ENCODE measurements at regions of chr20 and their contacts with region 1.

Region 1: DNA sequence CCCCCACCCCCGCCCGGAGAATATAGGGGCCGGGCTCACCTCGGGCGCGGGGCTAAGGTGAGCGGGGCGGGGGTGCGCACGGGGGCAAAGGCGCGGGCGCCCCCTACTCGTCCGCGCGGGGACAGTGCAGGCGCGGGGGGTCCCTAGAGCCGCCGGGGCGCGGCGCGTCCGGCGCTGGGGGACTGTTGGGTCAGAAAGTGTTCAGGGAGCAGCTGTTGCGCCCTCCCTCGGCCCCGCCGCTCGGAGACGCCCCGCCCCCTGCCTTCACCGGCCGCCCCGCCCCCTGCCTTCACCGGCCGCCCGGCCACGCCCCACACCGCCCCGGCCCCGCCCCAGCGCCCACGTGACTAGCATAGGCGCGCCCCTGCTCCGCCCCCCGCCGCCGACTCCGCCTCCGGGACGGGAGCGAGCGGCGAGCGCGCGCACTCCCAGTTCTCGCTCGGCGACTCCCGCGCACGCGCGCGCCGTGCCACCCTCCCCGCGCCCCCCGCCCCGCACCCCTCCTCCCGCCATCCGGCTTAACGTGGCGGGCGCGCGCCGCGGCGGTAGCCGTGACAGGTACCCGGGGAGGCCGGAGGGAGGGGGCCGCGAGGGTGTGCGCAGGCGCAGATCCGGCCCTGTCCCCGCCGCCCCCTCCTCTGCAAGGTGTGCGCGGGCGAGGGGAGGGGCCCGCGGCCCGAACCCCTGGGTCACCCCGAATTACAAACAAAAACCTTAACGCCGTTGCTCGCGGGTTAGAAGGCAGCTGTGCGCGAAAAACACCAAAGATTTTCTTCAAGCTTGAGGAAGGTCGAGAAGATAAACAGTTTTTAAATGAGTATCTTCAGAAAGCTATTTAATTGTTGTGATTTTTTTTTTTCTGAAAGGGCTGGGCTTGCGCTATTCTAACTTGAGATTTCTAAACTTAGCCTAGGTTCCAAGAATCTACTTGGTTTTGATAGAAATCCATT is 704 bp upstream of the ZNF217 start:
- DNase-seq: peak; percentile 73 to 98
- H3K4me3 ChIP-seq: peak overlapping the region; percentile 99
- H3K27ac ChIP-seq: peak overlapping the region; percentile 98
- H3K4me1 ChIP-seq: peaks cover 59% of the 10 kb centered on the region
- H3K27me3 ChIP-seq: no peaks in the 10 kb centered on the region
- CTCF ChIP-seq: no peak; the same call in 1 of the 2 replicates

Region 2: DNA sequence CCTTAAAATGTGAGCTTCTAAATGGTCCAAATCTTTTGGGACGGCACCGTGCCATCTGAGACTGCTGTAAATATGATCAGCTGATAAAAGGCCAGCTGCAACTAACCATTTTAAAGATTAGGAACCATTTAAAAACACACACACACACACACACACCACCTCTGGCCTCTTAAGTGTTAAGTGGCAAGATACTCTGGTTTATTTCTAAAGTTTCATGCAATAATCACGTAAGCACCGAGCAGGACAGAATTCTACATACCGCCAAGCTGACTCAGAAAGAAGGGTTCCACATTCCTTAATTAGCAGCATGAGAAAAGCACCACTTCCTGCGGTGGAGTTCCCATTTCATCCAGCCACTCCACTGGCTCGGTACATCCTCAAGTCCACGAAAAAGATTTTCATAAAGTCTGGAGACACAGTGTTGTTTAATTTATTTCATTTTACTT is 17.1 kb after region 1 on chr20:
- CTCF ChIA-PET with region 1: no interaction called
- POLR2A ChIA-PET with region 1: interaction called, 11 read pairs
- intact Hi-C with region 1: no loop called
- DNase-seq: peak; percentile 52 to 90
- H3K4me3 ChIP-seq: no peak overlapping the region
- H3K27ac ChIP-seq: peak overlapping the region; percentile 90
- H3K4me1 ChIP-seq: peaks cover 32% of the 10 kb centered on the region
- H3K27me3 ChIP-seq: no peaks in the 10 kb centered on the region
- CTCF ChIP-seq: no peak

Region 3: DNA sequence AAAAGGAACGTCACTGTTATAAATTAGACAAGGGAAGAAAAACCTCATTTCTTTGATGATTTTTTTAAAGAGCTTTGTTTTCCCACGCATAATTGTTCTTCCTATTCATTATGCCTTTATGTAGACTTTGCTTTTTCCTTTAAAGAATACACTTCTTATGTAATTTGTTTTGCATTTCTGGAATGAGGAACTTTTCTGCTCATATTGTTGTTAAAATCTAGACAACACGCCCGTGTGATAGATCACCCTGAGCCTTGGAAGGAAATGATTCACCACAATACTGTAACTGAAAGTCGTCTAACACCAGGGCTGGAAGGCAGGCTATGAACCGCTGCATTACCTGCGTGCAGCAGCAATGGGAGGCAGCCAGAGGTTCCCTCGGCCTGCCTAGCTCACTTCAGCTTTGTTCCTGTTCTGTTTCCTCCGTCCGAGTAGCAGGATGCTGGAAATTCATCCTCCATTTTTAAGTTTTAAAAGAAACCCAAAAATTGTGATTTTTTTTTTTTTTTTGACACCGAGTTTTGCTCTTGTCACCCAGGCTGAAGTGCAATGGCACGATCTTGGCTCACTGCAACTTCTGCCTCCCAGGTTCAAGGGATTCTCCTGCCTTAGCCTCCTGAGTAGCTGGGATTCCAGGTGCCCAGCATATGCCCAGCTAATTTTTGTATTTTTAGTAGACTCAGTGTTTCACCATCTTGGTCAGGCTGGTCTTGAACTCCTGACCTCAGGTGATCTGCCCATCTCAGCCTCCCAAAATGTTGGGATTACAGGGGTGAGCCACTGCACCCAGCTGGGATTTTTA is 48.9 kb after region 1 on chr20:
- CTCF ChIA-PET with region 1: no interaction called
- POLR2A ChIA-PET with region 1: interaction called, 11 read pairs
- intact Hi-C with region 1: loop called (anchors 1 kb)
- DNase-seq: peak; percentile 73 to 98
- H3K4me3 ChIP-seq: peak overlapping the region; percentile 26
- H3K27ac ChIP-seq: peak overlapping the region; percentile 94
- H3K4me1 ChIP-seq: peaks cover 39% of the 10 kb centered on the region
- H3K27me3 ChIP-seq: no peaks in the 10 kb centered on the region
- CTCF ChIP-seq: no peak; the same call in 1 of the 2 replicates

Region 4: DNA sequence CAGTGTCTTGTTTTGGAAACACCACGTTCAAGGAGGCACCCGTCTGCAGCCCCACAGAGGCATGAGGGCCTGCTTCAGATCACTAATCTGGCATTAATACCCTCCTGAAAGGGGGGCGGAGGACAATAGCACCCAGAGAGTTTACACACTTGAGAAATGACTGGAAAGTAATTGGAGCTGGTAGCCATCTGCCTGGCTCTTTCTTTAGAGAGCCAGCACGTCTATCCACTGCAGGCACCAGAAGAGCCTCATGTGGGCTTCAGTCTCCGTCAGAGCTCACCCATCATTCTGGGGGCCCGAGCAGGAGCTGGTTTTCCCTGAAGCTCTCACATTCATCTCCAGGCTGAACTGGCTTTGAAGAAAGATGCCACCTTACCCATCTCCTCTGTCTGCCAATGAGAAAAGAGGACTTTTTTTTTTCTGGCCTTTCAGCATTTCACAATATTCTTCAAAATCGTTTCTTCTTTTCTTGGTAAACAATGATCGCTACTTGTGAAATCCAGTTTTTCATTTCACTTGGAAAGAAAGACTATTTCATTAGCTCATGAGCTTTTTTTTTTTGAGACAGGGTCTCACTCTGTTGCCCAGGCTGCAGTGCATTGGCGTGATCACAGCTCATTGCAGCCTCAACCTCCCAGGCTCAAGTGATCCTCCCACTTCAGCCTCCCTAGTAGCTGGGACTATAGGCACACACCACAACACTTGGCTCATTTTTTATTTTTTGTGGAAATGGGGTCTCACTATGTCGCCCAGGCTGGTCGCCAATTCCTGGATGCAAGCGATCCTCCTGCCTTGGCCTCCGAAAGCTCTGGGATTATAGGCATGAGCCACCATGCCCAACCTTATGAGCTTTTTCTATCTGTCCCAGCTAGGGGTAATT is 124.0 kb after region 1 on chr20:
- CTCF ChIA-PET with region 1: no interaction called
- POLR2A ChIA-PET with region 1: no interaction called
- intact Hi-C with region 1: no loop called
- DNase-seq: no peak
- H3K4me3 ChIP-seq: no peak overlapping the region
- H3K27ac ChIP-seq: no peak overlapping the region
- H3K4me1 ChIP-seq: no peaks in the 10 kb centered on the region
- H3K27me3 ChIP-seq: no peaks in the 10 kb centered on the region
- CTCF ChIP-seq: no peak

Region 5: DNA sequence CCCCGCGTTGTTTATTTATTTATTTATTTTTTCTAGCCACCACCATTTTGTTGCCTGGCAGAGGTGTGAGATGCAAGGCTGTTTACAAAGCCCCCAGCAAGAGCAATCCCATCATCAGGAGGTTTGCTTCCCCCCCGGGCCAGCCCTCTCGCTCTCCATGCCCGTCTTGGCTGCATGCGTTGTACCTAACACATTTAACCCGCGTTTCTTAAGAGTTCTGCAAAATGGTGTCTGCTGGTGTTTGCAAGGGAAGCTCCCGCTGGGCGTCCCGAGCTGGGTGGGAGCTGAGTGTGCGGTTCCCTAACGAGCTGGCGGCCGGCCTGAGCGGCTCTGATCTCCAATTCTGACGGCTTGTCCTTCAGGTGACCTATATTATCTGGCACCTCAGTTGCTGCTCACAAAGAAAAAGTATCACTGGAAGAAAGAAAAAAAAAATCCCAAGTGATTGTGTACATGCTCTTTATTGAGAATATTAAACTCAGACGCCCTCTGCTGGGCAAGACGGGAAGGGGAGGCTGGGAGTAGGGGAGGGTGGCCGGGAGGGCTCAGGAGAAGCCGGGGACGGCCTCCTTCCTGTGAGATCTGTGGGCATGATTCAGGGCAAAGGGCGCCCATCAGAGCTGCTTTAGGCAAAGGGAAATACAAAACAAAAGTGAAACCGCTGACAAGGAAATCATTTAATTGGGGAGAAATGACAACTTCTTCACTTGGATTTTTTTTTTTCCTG is 321.3 kb after region 1 on chr20:
- CTCF ChIA-PET with region 1: no interaction called
- POLR2A ChIA-PET with region 1: no interaction called
- intact Hi-C with region 1: loop called (anchors 5 kb)
- DNase-seq: peak; percentile 95 to 98
- H3K4me3 ChIP-seq: peak overlapping the region; percentile 61
- H3K27ac ChIP-seq: peak overlapping the region; percentile 93
- H3K4me1 ChIP-seq: peaks cover 47% of the 10 kb centered on the region
- H3K27me3 ChIP-seq: no peaks in the 10 kb centered on the region
- CTCF ChIP-seq: peak; percentile 97

Region 6: DNA sequence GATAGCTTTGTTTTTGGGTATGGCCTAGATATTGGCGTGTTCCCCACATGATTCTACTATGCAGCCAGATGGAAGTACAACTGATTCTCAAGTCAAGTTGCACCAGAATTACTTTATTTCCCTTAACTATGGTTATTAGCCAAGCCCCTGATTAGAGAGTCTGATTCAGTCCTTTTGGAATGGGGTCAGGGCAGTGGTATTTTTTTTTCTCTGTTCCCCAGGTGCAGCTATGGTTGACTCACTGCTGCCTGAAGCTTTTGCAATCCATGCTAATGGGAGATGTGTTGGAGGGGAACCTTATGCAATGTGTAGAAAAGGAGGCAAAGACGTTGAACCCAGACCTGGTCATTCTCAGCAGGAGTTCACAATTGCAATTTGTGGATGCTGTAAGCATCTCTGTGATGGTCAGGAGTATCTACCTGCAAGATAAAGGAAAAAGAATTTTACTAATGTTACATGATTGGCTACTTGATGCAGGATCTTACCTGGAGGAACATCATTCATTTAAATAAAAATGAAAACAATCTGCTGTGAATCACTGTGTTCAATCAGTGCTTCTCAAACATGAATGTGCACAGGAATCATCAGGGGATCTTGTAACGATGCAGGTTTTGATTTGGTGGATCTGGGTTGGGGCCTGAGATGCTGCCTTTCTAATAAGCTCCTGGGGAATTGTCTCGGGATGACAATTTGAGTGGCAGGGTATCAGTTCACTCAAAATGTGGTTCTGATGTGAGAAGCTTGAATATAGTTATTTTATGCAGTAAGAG is 662.9 kb after region 1 on chr20:
- CTCF ChIA-PET with region 1: no interaction called
- POLR2A ChIA-PET with region 1: interaction called, 14 read pairs
- intact Hi-C with region 1: no loop called
- DNase-seq: peak; percentile 72 to 97
- H3K4me3 ChIP-seq: no peak overlapping the region
- H3K27ac ChIP-seq: peak overlapping the region; percentile 79
- H3K4me1 ChIP-seq: peaks cover 41% of the 10 kb centered on the region
- H3K27me3 ChIP-seq: no peaks in the 10 kb centered on the region
- CTCF ChIP-seq: no peak

Measured in PC-9 (cell line).